Activated T-helper 2 cell treated with anti-CD3 and anti-CD28 coated beads, Interferon-gamma antibody, Interleukin-2, Interleukin-4, amounts not matched to agents 10 μg/mL and 5 μg/mL and 100 μg/mL, durations not matched to agents 14 hours and 24 hours and 36 hours (primary cell): ENCODE measurements at regions of chr17 and their contacts with region 1.

Region 1: GRCh38 chr17:7745748-7746470 is 28.4 kb downstream of the DNAH2 start:
- DNase-seq: no peak
- H3K4me3 Mint-ChIP-seq: no peak overlapping the region
- H3K27ac Mint-ChIP-seq: no peak overlapping the region
- H3K4me1 Mint-ChIP-seq: no peaks in the 10 kb centered on the region
- H3K27me3 Mint-ChIP-seq: peaks cover 18% of the 10 kb centered on the region

Region 2: GRCh38 chr17:7851438-7852256 is 105.7 kb after region 1 on chr17:
- intact Hi-C with region 1: loop called (anchors 2 kb)
- DNase-seq: peak; percentile 92
- H3K4me3 Mint-ChIP-seq: peak overlapping the region; percentile 61
- H3K27ac Mint-ChIP-seq: no peak overlapping the region
- H3K4me1 Mint-ChIP-seq: peaks cover 30% of the 10 kb centered on the region
- H3K27me3 Mint-ChIP-seq: no peaks in the 10 kb centered on the region

Region 3: DNA sequence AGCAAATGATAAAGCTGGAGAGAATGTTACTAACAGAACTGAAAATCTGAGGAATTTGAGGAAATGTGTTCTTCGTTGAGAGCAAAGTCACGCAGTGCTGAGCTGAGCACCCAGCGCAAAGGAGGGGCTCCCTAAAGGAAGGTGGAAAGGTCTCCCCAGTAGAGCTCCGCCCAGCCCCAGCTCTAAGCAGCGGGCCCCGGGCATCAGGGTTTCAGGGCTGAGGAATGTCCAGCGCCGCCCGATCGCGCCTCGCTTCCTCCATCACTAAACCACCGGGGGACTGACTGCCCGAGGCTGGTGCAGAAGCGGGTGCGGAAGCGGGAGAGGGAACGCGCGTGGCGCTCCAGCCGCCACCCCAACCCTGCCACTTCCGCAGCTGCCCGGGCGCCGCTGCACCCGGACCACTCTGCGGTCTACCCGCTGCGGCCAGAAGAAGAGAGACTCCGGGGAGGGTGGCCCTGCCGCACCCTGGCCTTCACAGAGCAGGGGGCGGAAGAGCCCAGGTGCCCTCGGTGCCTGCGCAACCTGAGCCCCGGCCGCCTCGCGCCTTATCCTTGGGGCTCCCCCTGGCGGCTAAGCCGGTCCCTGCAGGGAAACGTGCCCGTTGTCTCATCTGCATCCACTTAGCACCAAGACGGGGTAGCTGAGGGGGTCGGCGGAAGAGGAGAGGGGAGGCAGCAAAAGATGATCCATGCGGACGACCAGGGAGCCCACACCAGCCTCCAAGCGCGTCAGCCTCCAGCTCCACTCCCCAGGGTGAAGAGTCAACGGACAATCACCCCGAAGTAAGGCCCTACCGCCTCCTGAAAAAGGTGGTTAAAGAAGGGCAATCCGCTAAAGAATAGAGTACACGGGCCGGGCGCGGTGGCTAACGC is 244.1 kb after region 1 on chr17:
- intact Hi-C with region 1: loop called (anchors 10 kb)
- DNase-seq: peak; percentile 86
- H3K4me3 Mint-ChIP-seq: peak overlapping the region; percentile 67
- H3K27ac Mint-ChIP-seq: peak overlapping the region; percentile 73
- H3K4me1 Mint-ChIP-seq: peaks cover 20% of the 10 kb centered on the region
- H3K27me3 Mint-ChIP-seq: peaks cover 17% of the 10 kb centered on the region